CD4-positive, alpha-beta memory T cell (primary cell): ENCODE measurements at regions of chr11 and their contacts with region 1.

Region 1: DNA sequence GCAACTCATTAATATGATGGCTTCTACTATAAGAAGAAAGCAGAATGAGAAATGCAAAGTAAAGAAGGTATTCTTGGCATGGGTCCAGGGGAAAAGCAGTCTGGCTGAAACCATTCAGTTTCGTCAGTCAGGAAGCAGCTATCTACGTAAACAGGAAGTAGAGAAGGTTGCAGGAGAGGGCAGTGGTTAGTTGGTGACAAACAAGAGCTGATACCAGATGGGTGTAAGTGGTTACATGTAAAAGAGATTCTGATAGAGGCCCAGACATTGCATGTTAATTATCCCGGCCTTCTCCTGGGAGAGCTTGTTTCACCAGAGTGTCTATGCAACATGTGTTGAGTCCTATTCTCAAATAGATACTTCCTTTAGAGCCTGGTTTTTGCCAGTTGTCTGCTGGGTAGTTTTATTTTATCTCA is 58.4 kb upstream of the PSMA1 start:
- DNase-seq: peak; percentile 88 to 94 (median 91)
- H3K4me3 ChIP-seq: peak overlapping the region in 1 of 2 donors; percentile 25
- H3K4me3 Mint-ChIP-seq: peak overlapping the region; percentile 18 to 76 (median 57)
- H3K27ac ChIP-seq: peak overlapping the region; percentile 70
- H3K27ac Mint-ChIP-seq: peak overlapping the region; percentile 83 to 99 (median 97)
- H3K4me1 ChIP-seq: peaks cover 44% of the 10 kb centered on the region
- H3K4me1 Mint-ChIP-seq: peaks cover 46 to 68% (median 59%) of the 10 kb centered on the region in 4 donors
- H3K27me3 ChIP-seq: no peaks in the 10 kb centered on the region
- H3K27me3 Mint-ChIP-seq: no peaks in the 10 kb centered on the region

Region 2: DNA sequence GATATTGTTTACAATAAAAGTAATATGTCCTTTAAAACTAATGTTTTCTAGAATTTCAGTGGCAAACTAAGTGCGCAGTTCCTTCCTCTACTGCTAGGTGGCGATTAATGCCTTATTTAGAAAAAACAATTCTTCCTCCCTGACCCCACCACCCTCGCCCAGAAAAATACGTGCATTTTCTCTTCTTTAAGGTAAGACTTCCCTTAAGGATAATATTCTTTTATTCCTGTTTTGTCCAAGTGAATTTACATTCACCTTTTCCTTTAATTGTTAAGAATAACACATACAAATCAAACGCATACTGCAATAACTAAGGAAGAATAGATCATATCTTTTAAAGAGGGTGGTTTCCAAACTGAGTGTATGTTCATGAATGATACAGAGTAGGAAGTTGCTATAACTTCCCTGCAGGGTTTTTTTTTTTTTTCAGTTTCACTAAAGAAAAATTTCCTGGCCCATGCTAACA is 41.4 kb before region 1 on chr11:
- CTCF ChIA-PET with region 1: interaction called, 4 read pairs
- POLR2A ChIA-PET with region 1: interaction called, 8 read pairs
- intact Hi-C with region 1: loop called (anchors 1 kb)
- DNase-seq: peak; percentile 49 to 69 (median 65)
- H3K4me3 ChIP-seq: peak overlapping the region in 1 of 2 donors; percentile 23
- H3K4me3 Mint-ChIP-seq: peak overlapping the region; percentile 69 to 90 (median 82)
- H3K27ac ChIP-seq: peak overlapping the region; percentile 48
- H3K27ac Mint-ChIP-seq: peak overlapping the region; percentile 77 to 97 (median 92)
- H3K4me1 ChIP-seq: peaks cover 5% of the 10 kb centered on the region
- H3K4me1 Mint-ChIP-seq: peaks cover 3 to 14% (median 4%) of the 10 kb centered on the region in 4 donors
- H3K27me3 ChIP-seq: no peaks in the 10 kb centered on the region
- H3K27me3 Mint-ChIP-seq: no peaks in the 10 kb centered on the region

Region 3: DNA sequence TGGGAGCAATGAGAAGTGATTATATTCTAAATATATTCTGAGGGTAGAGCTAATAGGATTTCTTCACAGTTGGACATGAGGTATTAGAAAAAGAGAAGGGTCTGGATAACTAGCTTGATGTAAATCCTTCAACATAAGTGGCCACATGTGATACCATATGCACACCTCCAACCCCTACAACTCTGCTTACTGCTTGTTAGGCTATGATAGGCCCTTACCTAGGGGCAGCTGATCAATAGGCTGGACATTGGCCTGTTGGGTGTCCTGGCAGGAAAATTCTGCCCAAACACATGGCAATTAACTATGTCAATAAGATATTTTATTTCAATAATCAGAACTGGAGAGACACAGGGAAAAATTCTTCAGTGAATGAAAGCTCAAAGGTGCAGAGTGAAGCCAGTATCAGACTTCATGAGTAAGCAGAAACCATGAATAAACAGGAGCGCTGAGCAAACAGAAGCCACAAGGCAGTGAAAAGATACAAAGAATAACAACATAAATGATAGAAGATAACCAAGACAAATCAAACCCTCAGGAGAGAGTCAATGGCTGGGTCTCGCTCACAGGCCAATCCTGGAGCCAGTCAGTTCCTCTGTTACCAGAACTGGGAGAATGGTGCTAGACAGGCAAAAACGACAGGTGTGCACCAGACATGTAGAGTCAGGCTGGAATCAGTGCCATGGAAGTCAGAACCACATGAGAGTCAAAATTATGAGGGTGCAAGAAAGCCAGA is 12.1 kb before region 1 on chr11:
- CTCF ChIA-PET with region 1: interaction called, 16 read pairs
- POLR2A ChIA-PET with region 1: interaction called, 89 read pairs
- intact Hi-C with region 1: loop called (anchors 1 kb)
- DNase-seq: no peak
- H3K4me3 ChIP-seq: no peak overlapping the region
- H3K4me3 Mint-ChIP-seq: peak overlapping the region in 3 of 8 donors; percentile 5 to 56 (median 8)
- H3K27ac ChIP-seq: no peak overlapping the region
- H3K27ac Mint-ChIP-seq: peak overlapping the region in 6 of 7 donors; percentile 37 to 89 (median 66)
- H3K4me1 ChIP-seq: peaks cover 54% of the 10 kb centered on the region
- H3K4me1 Mint-ChIP-seq: peaks cover 40 to 72% (median 56%) of the 10 kb centered on the region in 4 donors
- H3K27me3 ChIP-seq: no peaks in the 10 kb centered on the region
- H3K27me3 Mint-ChIP-seq: no peaks in the 10 kb centered on the region

Region 4: DNA sequence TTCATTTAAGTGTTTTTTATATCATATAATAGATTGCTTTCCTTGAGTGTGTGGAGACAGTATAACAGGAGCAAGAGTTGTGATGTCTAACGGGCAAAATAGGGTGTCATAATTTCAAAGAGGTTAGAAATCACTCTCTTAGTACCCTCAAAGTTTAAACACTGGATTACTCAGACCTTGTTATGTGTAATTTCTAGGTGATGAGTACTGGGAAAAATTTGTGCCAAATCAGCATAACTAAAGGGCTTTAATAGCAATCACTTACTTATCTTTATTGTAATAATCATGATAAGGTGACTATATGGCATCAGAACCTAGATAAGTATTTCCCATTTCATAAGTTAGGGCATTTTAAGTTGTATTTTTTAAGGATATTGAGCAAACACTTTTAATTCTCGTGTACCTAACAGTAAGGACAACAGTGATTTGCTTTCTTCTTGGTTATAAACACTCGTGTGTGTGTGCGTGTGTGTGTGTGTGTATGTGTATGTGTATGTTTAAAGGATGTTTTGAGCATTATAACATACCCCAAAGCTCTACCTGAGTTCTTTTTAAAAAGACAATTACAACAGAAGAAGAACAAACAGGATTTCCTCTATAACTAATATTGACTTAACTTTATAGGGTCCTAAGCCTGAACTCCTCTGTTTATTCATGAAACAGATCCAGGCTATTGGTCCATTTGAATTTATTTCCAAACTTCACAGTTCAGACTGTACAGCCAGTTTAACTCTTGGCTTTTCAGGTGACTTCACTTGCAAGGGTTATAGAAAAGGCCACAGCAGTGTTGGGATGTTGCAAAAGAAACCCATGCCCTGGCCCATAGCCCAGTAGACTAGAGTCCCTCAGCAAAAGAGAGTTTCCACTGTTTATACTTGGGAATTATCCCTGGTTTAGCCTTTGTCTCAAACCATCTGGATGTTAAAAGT is 41.3 kb after region 1 on chr11:
- CTCF ChIA-PET with region 1: interaction called, 5 read pairs
- POLR2A ChIA-PET with region 1: interaction called, 14 read pairs
- intact Hi-C with region 1: no loop called
- DNase-seq: no peak
- H3K4me3 ChIP-seq: no peak overlapping the region
- H3K4me3 Mint-ChIP-seq: no peak overlapping the region
- H3K27ac ChIP-seq: no peak overlapping the region
- H3K27ac Mint-ChIP-seq: peak overlapping the region in 1 of 7 donors; percentile 65
- H3K4me1 ChIP-seq: peaks cover 5% of the 10 kb centered on the region
- H3K4me1 Mint-ChIP-seq: peaks cover 17 to 55% (median 34%) of the 10 kb centered on the region in 4 donors
- H3K27me3 ChIP-seq: no peaks in the 10 kb centered on the region
- H3K27me3 Mint-ChIP-seq: no peaks in the 10 kb centered on the region

Region 5: DNA sequence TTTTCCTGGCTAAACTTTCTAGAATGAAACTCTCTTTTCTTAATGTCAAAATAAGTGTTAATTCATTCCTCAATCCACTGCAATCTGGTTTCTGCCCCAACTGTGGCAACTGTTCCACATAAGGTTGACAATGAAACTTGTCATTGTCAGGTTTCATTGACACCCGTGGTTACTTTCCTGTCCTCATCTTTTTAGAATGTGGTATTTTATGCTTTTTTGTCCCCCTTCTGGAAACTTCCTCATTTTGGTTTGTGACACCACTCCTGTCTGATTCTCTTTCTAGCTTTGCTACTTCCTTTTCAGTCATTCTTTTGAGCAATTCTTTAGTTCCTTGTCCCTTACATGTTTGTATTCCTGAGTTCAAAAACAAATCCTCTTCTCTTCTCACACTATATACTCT is 57.6 kb after region 1 on chr11:
- CTCF ChIA-PET with region 1: interaction called, 18 read pairs
- POLR2A ChIA-PET with region 1: interaction called, 168 read pairs
- intact Hi-C with region 1: no loop called
- DNase-seq: peak in 1 of 5 donors; percentile 23
- H3K4me3 ChIP-seq: no peak overlapping the region
- H3K4me3 Mint-ChIP-seq: peak overlapping the region in 7 of 8 donors; percentile 13 to 71 (median 44)
- H3K27ac ChIP-seq: no peak overlapping the region
- H3K27ac Mint-ChIP-seq: peak overlapping the region; percentile 37 to 92 (median 80)
- H3K4me1 ChIP-seq: peaks cover 68% of the 10 kb centered on the region
- H3K4me1 Mint-ChIP-seq: peaks cover 51 to 76% (median 57%) of the 10 kb centered on the region in 4 donors
- H3K27me3 ChIP-seq: no peaks in the 10 kb centered on the region
- H3K27me3 Mint-ChIP-seq: no peaks in the 10 kb centered on the region

Region 6: GRCh38 chr11:14892036-14892567 is 313.6 kb after region 1 on chr11 and contains the start of gene CYP2R1:
- CTCF ChIA-PET with region 1: no interaction called
- POLR2A ChIA-PET with region 1: interaction called, 13 read pairs
- intact Hi-C with region 1: no loop called
- DNase-seq: peak; percentile 88 to 92 (median 91)
- H3K4me3 ChIP-seq: peak within 1 kb of the TSS; percentile 91 to 96
- H3K4me3 Mint-ChIP-seq: peak within 1 kb of the TSS; percentile 90 to 99 (median 94)
- H3K27ac ChIP-seq: peak within 1 kb of the TSS; percentile 80
- H3K27ac Mint-ChIP-seq: peak within 1 kb of the TSS; percentile 94 to 99 (median 96)
- H3K4me1 ChIP-seq: peaks cover 36% of the 10 kb centered on the region
- H3K4me1 Mint-ChIP-seq: peaks cover 17 to 48% (median 34%) of the 10 kb centered on the region in 4 donors
- H3K27me3 ChIP-seq: no peaks in the 10 kb centered on the region
- H3K27me3 Mint-ChIP-seq: no peaks in the 10 kb centered on the region
- total RNA-seq, gene CYP2R1: 12.1 to 14.7 TPM